Caco-2 (cell line): ENCODE measurements at regions of chr7 and their contacts with region 1.

Region 1: DNA sequence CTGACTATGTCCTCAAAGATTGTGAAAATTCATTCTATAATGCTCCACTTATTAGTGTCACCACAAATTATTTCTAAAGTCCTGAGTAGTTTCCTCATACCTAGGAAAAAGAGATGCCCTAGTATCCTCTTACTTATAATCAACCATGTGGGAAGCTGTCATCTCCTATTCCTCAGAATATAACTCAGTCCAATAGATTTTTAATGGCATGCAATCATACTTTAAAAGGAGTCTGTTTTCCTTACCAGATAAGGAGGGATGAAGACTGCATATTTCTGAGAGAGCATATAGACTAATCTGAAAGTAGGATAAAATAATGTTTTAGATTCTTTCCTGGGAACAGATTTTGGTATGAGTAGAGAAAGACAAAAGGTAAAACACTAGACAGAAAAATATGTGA is 727.7 kb upstream of the GRM3 start:
- DNase-seq: no peak
- H3K4me3 ChIP-seq: no peak overlapping the region
- H3K4me3 Mint-ChIP-seq: no peak overlapping the region
- H3K27ac Mint-ChIP-seq: no peak overlapping the region
- H3K4me1 ChIP-seq: no peaks in the 10 kb centered on the region
- H3K4me1 Mint-ChIP-seq: no peaks in the 10 kb centered on the region
- H3K27me3 ChIP-seq: no peaks in the 10 kb centered on the region
- H3K27me3 Mint-ChIP-seq: no peaks in the 10 kb centered on the region
- CTCF ChIP-seq: no peak

Region 2: GRCh38 chr7:85655252-85655651 is 260.8 kb before region 1 on chr7:
- CTCF ChIA-PET with region 1: no interaction called
- POLR2A ChIA-PET with region 1: no interaction called
- intact Hi-C with region 1: no loop called
- DNase-seq: no peak
- H3K4me3 ChIP-seq: no peak overlapping the region
- H3K4me3 Mint-ChIP-seq: no peak overlapping the region
- H3K27ac Mint-ChIP-seq: no peak overlapping the region
- H3K4me1 ChIP-seq: no peaks in the 10 kb centered on the region
- H3K4me1 Mint-ChIP-seq: no peaks in the 10 kb centered on the region
- H3K27me3 ChIP-seq: no peaks in the 10 kb centered on the region
- H3K27me3 Mint-ChIP-seq: no peaks in the 10 kb centered on the region
- CTCF ChIP-seq: no peak

Region 3: DNA sequence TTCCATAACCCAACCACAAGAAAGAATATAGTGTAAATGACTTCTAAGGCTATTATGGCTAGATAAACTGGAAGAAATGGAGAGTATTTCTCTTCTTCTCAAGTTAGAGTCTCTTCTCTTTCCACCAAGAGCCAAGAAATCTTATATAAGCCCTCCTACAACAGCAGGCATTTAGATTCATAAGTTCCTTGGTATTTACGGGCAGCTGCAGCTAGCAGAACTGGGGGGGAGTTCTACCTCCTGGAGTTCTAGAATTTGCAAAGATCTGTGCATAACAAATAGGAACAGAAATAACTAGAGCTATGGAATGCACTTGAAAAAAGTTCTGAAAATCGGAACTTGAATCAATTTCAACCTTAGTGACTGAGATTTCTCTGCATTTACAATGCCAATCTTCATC is 12.5 kb after region 1 on chr7:
- CTCF ChIA-PET with region 1: no interaction called
- POLR2A ChIA-PET with region 1: no interaction called
- intact Hi-C with region 1: loop called (anchors 1 kb)
- DNase-seq: no peak
- H3K4me3 ChIP-seq: no peak overlapping the region
- H3K4me3 Mint-ChIP-seq: no peak overlapping the region
- H3K27ac Mint-ChIP-seq: no peak overlapping the region
- H3K4me1 ChIP-seq: no peaks in the 10 kb centered on the region
- H3K4me1 Mint-ChIP-seq: peaks cover 6% of the 10 kb centered on the region
- H3K27me3 ChIP-seq: no peaks in the 10 kb centered on the region
- H3K27me3 Mint-ChIP-seq: no peaks in the 10 kb centered on the region
- CTCF ChIP-seq: no peak